Activated naive CD4-positive, alpha-beta T cell treated with anti-CD3 and anti-CD28 coated beads for 36 hours (primary cell): ENCODE measurements at regions of chr15 and their contacts with region 1.

Region 1: GRCh38 chr15:58331903-58332675 is 99.7 kb upstream of the LIPC start:
- DNase-seq: peak; percentile 97
- H3K4me3 Mint-ChIP-seq: peak overlapping the region; percentile 39
- H3K27ac Mint-ChIP-seq: peak overlapping the region; percentile 95
- H3K4me1 Mint-ChIP-seq: peaks cover 41% of the 10 kb centered on the region
- H3K27me3 Mint-ChIP-seq: no peaks in the 10 kb centered on the region

Region 2: GRCh38 chr15:57706405-57707209 is 625.5 kb before region 1 on chr15 and contains the start of gene POLR2M:
- CTCF ChIA-PET with region 1: no interaction called
- intact Hi-C with region 1: loop called (anchors 10 kb)
- DNase-seq: peak; percentile 98
- H3K4me3 Mint-ChIP-seq: peak within 1 kb of the TSS; percentile 90
- H3K27ac Mint-ChIP-seq: peak within 1 kb of the TSS; percentile 93
- H3K4me1 Mint-ChIP-seq: peaks cover 79% of the 10 kb centered on the region
- H3K27me3 Mint-ChIP-seq: no peaks in the 10 kb centered on the region
- total RNA-seq, gene POLR2M: 107 to 114 TPM

Region 3: GRCh38 chr15:58309963-58310928 is 21.8 kb before region 1 on chr15:
- CTCF ChIA-PET with region 1: interaction called, 4 read pairs
- intact Hi-C with region 1: loop called (anchors 1 kb)
- DNase-seq: no peak
- H3K4me3 Mint-ChIP-seq: no peak overlapping the region
- H3K27ac Mint-ChIP-seq: no peak overlapping the region
- H3K4me1 Mint-ChIP-seq: peaks cover 26% of the 10 kb centered on the region
- H3K27me3 Mint-ChIP-seq: no peaks in the 10 kb centered on the region

Region 4: GRCh38 chr15:58357521-58358476 is 25.7 kb after region 1 on chr15:
- CTCF ChIA-PET with region 1: interaction called, 3 read pairs
- intact Hi-C with region 1: loop called (anchors 1 kb)
- DNase-seq: peak; percentile 86
- H3K4me3 Mint-ChIP-seq: peak overlapping the region; percentile 20
- H3K27ac Mint-ChIP-seq: peak overlapping the region; percentile 72
- H3K4me1 Mint-ChIP-seq: peaks cover 52% of the 10 kb centered on the region
- H3K27me3 Mint-ChIP-seq: no peaks in the 10 kb centered on the region

Region 5: DNA sequence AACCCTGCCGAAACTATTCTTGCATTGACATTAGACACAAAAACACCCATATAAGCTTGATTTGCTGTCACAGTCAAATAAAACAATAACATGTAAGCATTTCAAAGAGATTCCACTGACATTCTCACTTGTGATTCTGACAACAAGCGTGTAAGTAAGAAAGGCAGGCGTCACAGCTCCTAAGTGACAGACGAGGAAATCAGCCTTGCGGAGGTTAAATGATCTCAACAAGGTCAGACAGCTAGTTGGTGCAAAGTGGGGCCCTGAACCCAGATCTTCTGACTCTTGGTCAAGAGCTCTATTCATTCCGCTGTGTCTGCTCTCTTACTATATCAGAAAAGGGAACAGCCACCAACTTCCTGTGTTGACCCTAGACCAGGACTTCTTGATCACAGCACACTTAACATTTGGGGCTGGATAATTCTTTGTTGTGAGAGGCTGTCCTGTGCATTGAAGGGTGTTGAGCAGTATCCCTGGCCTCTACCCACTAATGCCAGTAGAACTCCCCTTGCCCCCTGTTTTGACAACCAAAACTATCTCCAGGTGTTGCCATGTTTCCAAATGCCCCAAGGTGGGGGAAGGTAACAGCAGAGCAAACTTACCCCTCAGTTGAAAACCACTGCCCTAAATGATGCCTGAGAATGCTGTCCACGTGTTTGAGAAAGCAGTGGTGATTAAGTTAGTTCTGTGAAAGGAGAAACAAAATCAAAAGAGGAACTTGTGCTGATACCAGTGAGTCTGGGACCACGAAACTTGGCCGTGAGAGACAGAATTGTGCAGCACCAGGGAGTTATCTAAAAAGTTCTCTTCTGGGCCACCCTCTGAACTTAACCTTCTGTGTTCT is 185.8 kb after region 1 on chr15:
- CTCF ChIA-PET with region 1: no interaction called
- intact Hi-C with region 1: loop called (anchors 1 kb)
- DNase-seq: peak; percentile 38
- H3K4me3 Mint-ChIP-seq: no peak overlapping the region
- H3K27ac Mint-ChIP-seq: peak overlapping the region; percentile 43
- H3K4me1 Mint-ChIP-seq: peaks cover 62% of the 10 kb centered on the region
- H3K27me3 Mint-ChIP-seq: no peaks in the 10 kb centered on the region